Psoas muscle (tissue), 8 donors: ENCODE measurements at regions of chr4 and their contacts with region 1.

Region 1: GRCh38 chr4:76208005-76208765 is 5.4 kb downstream of the SCARB2 start:
- DNase-seq: peak; percentile 80 to 88
- ATAC-seq: peak; percentile 82 to 88 (median 85)
- H3K4me3 ChIP-seq: peak overlapping the region; percentile 95
- H3K27ac ChIP-seq: peak overlapping the region; percentile 97
- H3K4me1 ChIP-seq: peaks cover 78% of the 10 kb centered on the region
- H3K27me3 ChIP-seq: no peaks in the 10 kb centered on the region
- CTCF ChIP-seq: no peak

Region 2: DNA sequence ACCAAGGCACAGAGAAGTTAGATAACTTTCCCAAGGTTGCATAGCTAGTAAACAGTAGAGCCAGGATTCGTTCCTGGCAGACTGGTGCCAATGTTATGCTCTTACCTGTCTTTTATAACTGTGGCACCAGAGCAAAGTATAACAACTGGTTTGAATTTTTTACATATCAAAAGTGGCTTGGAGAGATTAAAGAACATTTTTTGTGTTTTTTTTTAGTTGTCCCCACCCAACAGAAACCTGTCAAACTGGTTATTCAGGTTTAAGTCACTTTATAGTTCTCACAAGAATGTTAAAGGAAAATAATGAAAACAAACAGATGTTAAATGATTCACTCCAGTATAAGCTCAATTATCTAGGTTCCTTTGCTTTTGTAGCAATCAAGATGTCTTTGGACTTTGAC is 27.7 kb after region 1 on chr4:
- intact Hi-C with region 1: loop called in 1 of 2 experiments (anchors 5 kb)
- DNase-seq: no peak
- ATAC-seq: no peak
- H3K4me3 ChIP-seq: no peak overlapping the region
- H3K27ac ChIP-seq: peak overlapping the region; percentile 54
- H3K4me1 ChIP-seq: peaks cover 16% of the 10 kb centered on the region
- H3K27me3 ChIP-seq: no peaks in the 10 kb centered on the region
- CTCF ChIP-seq: no peak